Mammary epithelial cell (primary cell): ENCODE measurements at regions of chr1 and their contacts with region 1.

Region 1: GRCh38 chr1:169809370-169810095 is 14.8 kb upstream of the METTL18 start:
- DNase-seq: peak; percentile 9
- H3K4me3 ChIP-seq: no peak overlapping the region
- H3K27ac ChIP-seq: no peak overlapping the region
- H3K4me1 ChIP-seq: no peaks in the 10 kb centered on the region
- H3K27me3 ChIP-seq: no peaks in the 10 kb centered on the region
- CTCF ChIP-seq: peak; percentile 45 to 55

Region 2: GRCh38 chr1:169546087-169546995 is 263.2 kb before region 1 on chr1:
- CTCF ChIA-PET with region 1: no interaction called
- dilution Hi-C with region 1: no loop called
- in situ Hi-C with region 1: loop called in 1 of 2 experiments (anchors 25 kb)
- intact Hi-C with region 1: loop called (anchors 1 kb)
- DNase-seq: peak; percentile 59
- H3K4me3 ChIP-seq: no peak overlapping the region
- H3K27ac ChIP-seq: no peak overlapping the region
- H3K4me1 ChIP-seq: no peaks in the 10 kb centered on the region
- H3K27me3 ChIP-seq: no peaks in the 10 kb centered on the region
- CTCF ChIP-seq: peak; percentile 76 to 85

Region 3: DNA sequence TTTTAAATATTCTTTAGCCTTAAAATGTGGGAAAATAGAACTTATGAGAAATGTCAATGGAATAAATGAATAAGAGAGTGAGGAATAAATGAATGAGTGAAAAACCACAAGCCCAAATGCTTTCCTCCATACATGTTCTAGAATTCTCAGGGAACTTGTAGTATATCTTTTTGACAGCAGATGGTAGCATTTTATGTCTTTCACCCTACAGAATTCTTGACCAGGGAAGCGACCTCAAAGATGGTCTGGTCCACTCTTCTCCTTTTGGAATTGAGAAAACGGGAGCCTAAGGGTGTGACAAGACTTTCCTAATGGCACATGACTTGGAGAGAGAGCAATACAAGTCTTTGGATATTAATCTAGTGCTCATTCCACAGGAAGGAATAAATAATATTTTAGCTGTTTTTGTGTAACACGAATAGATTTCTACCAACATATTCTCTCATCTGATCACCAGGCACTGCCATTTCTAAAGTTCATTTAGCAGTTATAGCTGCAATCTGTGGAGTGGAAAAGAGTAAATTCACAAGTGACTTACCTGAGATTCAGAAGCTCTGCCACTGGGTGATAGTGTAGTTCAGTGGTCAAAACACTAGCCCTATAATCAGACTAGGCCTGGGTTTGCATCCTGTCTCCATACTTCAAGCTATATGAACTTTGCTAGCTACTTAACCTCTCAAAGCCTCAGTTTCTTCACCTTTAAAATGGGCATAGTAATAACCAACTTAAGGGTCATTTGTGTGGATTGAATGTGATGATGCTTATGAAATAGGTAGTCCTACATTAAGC is 208.2 kb before region 1 on chr1:
- CTCF ChIA-PET with region 1: no interaction called
- dilution Hi-C with region 1: no loop called
- in situ Hi-C with region 1: loop called in 1 of 2 experiments (anchors 25 kb)
- intact Hi-C with region 1: loop called (anchors 1 kb)
- DNase-seq: peak; percentile 17
- H3K4me3 ChIP-seq: no peak overlapping the region
- H3K27ac ChIP-seq: no peak overlapping the region
- H3K4me1 ChIP-seq: no peaks in the 10 kb centered on the region
- H3K27me3 ChIP-seq: no peaks in the 10 kb centered on the region
- CTCF ChIP-seq: peak; percentile 25 to 46

Region 4: GRCh38 chr1:169753552-169753951 is 56.0 kb before region 1 on chr1:
- CTCF ChIA-PET with region 1: no interaction called
- dilution Hi-C with region 1: no loop called
- in situ Hi-C with region 1: no loop called
- intact Hi-C with region 1: loop called (anchors 5 kb)
- DNase-seq: no peak
- H3K4me3 ChIP-seq: no peak overlapping the region
- H3K27ac ChIP-seq: no peak overlapping the region
- H3K4me1 ChIP-seq: no peaks in the 10 kb centered on the region
- H3K27me3 ChIP-seq: no peaks in the 10 kb centered on the region
- CTCF ChIP-seq: peak; percentile 7 to 11